ENCODE measurements at regions of chr9 and their contacts with region 1.

Region 1: DNA sequence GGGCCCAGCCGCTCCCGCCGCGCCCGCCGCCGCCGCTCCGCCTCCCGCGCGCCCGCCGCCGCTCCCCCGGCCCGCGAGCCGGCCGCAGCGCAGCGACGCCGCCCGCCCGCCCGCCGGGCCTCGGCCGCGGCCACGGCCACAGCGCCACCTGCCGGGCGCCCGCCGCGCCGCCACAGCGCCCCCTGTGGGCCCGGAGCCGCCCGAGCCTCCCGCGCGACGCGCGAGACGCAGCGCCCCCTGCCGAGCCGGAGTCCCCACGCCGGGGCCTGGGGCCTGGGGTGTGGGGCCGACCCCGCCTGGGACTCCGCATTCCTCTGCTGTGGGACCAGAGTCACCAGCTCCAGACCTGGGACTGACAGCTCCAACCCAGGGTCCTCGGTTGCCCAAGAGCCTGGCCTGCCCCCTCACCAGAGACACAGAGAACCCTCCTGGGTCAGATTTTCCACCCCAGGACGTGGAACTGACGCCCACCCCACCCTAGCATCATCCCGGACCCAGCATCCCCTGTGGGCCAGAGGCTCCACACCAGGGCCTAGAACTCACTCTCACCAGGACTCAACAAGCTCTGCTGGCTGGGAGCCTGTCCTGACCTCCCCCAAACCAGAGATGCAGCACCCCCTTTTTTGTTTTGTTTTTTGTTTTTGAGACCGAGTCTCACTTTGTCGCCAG is at the start of gene RAPGEF1:
- DNase-seq: peak; percentile 82
- ATAC-seq: peak; percentile 82
- H3K4me3 Mint-ChIP-seq: peak within 1 kb of the TSS; percentile 91
- H3K27ac Mint-ChIP-seq: peak within 1 kb of the TSS; percentile 85
- H3K4me1 Mint-ChIP-seq: peaks cover 64% of the 10 kb centered on the region
- H3K27me3 Mint-ChIP-seq: no peaks in the 10 kb centered on the region
- total RNA-seq, gene RAPGEF1: 128 TPM

Region 2: GRCh38 chr9:131590908-131591844 is 148.9 kb before region 1 on chr9:
- CTCF ChIA-PET with region 1: interaction called, 54 read pairs
- POLR2A ChIA-PET with region 1: interaction called, 3 read pairs
- DNase-seq: peak; percentile 83
- ATAC-seq: peak; percentile 86
- H3K4me3 Mint-ChIP-seq: peak overlapping the region; percentile 23
- H3K27ac Mint-ChIP-seq: peak overlapping the region; percentile 86
- H3K4me1 Mint-ChIP-seq: peaks cover 45% of the 10 kb centered on the region
- H3K27me3 Mint-ChIP-seq: no peaks in the 10 kb centered on the region

Region 3: DNA sequence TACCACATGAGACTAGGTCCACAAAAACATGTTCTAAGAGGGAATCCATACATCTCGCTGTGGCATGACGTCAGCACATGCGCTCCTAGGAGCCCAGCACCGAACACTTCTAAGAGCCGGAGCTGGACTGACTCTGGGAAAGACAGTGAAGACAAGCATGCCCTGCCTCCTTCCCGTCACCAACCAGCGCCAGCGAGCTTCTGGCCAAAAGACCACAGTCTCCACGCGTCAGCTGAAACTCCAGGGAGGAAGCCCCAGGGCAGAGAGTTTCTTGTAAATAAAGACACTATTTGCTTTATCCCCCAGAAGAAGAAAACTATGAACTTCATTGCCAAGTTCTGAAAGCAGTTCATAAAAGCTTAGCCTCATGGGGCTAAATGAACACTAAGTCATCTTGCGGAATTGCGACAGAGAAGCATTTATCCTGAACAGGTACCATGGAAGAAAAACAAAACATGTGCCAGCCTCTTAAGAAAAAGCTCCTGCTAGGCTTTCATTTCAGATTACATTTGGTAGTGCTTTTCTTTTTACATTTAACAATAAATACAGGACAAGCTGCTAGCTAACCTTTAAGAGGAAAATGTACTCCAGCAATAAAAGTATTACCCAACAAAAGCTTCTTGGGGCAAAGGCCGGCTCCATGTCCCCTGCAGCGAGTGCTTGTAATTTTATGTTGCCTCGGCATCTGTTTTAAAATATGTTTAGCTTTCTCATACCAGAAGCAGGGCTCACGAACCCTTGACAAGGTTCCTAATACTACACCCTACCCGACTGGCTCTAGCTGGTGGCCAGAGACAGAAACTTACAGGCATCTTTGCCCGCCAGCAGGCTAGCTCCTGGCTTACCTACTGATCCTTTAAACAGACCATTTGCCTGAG is 98.3 kb before region 1 on chr9:
- CTCF ChIA-PET with region 1: interaction called, 12 read pairs
- POLR2A ChIA-PET with region 1: interaction called, 3 read pairs
- DNase-seq: no peak
- ATAC-seq: no peak
- H3K4me3 Mint-ChIP-seq: no peak overlapping the region
- H3K27ac Mint-ChIP-seq: no peak overlapping the region
- H3K4me1 Mint-ChIP-seq: peaks cover 28% of the 10 kb centered on the region
- H3K27me3 Mint-ChIP-seq: no peaks in the 10 kb centered on the region

Region 4: GRCh38 chr9:131678499-131679111 is 61.5 kb before region 1 on chr9:
- CTCF ChIA-PET with region 1: interaction called, 100 read pairs
- POLR2A ChIA-PET with region 1: interaction called, 4 read pairs
- DNase-seq: peak; percentile 84
- ATAC-seq: peak; percentile 97
- H3K4me3 Mint-ChIP-seq: peak overlapping the region; percentile 37
- H3K27ac Mint-ChIP-seq: peak overlapping the region; percentile 91
- H3K4me1 Mint-ChIP-seq: peaks cover 81% of the 10 kb centered on the region
- H3K27me3 Mint-ChIP-seq: no peaks in the 10 kb centered on the region